ENCODE measurements at regions of chr11 and their contacts with region 1.

Region 1: DNA sequence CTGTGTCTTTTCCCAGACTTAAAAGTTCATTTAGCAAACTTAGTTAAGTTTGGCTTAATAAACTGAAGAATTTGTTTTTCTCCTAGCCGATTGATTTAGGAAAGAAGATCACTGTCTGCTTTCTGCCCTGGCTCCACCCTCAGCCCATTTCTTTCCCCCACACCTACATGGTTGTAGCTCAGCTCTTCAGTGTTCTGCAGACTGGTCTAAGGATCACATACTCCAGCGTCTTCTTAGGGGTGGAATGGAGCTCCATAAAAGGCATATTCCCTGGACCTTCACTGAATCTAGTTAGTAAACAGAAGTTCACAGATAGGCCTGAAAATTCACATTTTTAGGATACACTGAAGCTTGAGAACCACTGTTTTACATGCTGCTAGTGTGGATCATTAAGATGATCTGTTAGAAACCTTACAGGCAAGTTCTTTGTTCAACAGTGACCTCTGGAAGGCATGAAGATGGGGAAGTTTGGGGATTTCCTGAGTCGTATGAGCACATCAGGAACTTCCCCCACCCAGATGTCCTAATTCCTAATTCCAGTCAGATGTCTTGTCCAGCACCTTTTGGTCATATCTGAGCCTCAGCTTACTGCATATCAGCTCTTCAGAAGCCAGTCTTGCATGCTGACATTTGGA is 16.8 kb downstream of the PIWIL4 start:
- DNase-seq: no peak
- H3K4me3 ChIP-seq: no peak overlapping the region
- H3K27ac ChIP-seq: no peak overlapping the region
- H3K4me1 ChIP-seq: no peaks in the 10 kb centered on the region
- H3K27me3 ChIP-seq: no peaks in the 10 kb centered on the region
- CTCF ChIP-seq: no peak
- POLR2A ChIP-seq: no peak

Region 2: GRCh38 chr11:94511932-94512781 is 71.8 kb before region 1 on chr11 and contains the start of gene C11orf97:
- intact Hi-C with region 1: loop called (anchors 10 kb)
- DNase-seq: peak; percentile 33 to 53
- H3K4me3 ChIP-seq: peak within 1 kb of the TSS; percentile 16 to 41
- H3K27ac ChIP-seq: no peak within 1 kb of the TSS
- H3K4me1 ChIP-seq: no peaks in the 10 kb centered on the region
- H3K27me3 ChIP-seq: no peaks in the 10 kb centered on the region
- CTCF ChIP-seq: no peak
- POLR2A ChIP-seq: no peak
- total RNA-seq, gene C11orf97: not detected